ENCODE measurements at regions of chr2 and their contacts with region 1.

Region 1: GRCh38 chr2:85595301-85596025 is at the start of gene RNF181:
- DNase-seq: peak; percentile 99
- H3K4me3 Mint-ChIP-seq: peak within 1 kb of the TSS; percentile 98
- H3K27ac Mint-ChIP-seq: peak within 1 kb of the TSS; percentile 98
- H3K4me1 Mint-ChIP-seq: peaks cover 19% of the 10 kb centered on the region
- H3K27me3 Mint-ChIP-seq: no peaks in the 10 kb centered on the region
- CTCF ChIP-seq: no peak
- total RNA-seq, gene RNF181: 125 and 215 TPM in 2 replicates

Region 2: GRCh38 chr2:85420536-85421259 is 174.8 kb before region 1 on chr2:
- CTCF ChIA-PET with region 1: interaction called, 9 read pairs
- POLR2A ChIA-PET with region 1: interaction called, 12 read pairs
- intact Hi-C with region 1: loop called (anchors 5 kb)
- DNase-seq: peak; percentile 83
- H3K4me3 Mint-ChIP-seq: peak overlapping the region; percentile 24
- H3K27ac Mint-ChIP-seq: peak overlapping the region; percentile 92
- H3K4me1 Mint-ChIP-seq: peaks cover 30% of the 10 kb centered on the region
- H3K27me3 Mint-ChIP-seq: no peaks in the 10 kb centered on the region
- CTCF ChIP-seq: peak; percentile 99

Region 3: GRCh38 chr2:85561317-85561979 is 34.0 kb before region 1 on chr2 and contains the start of gene GGCX:
- CTCF ChIA-PET with region 1: interaction called, 3 read pairs
- POLR2A ChIA-PET with region 1: interaction called, 28 read pairs
- intact Hi-C with region 1: loop called (anchors 5 kb)
- DNase-seq: peak; percentile 93
- H3K4me3 Mint-ChIP-seq: peak within 1 kb of the TSS; percentile 97
- H3K27ac Mint-ChIP-seq: peak within 1 kb of the TSS; percentile 93
- H3K4me1 Mint-ChIP-seq: peaks cover 6% of the 10 kb centered on the region
- H3K27me3 Mint-ChIP-seq: no peaks in the 10 kb centered on the region
- CTCF ChIP-seq: no peak
- total RNA-seq, gene GGCX: 49.1 and 52.2 TPM in 2 replicates

Region 4: DNA sequence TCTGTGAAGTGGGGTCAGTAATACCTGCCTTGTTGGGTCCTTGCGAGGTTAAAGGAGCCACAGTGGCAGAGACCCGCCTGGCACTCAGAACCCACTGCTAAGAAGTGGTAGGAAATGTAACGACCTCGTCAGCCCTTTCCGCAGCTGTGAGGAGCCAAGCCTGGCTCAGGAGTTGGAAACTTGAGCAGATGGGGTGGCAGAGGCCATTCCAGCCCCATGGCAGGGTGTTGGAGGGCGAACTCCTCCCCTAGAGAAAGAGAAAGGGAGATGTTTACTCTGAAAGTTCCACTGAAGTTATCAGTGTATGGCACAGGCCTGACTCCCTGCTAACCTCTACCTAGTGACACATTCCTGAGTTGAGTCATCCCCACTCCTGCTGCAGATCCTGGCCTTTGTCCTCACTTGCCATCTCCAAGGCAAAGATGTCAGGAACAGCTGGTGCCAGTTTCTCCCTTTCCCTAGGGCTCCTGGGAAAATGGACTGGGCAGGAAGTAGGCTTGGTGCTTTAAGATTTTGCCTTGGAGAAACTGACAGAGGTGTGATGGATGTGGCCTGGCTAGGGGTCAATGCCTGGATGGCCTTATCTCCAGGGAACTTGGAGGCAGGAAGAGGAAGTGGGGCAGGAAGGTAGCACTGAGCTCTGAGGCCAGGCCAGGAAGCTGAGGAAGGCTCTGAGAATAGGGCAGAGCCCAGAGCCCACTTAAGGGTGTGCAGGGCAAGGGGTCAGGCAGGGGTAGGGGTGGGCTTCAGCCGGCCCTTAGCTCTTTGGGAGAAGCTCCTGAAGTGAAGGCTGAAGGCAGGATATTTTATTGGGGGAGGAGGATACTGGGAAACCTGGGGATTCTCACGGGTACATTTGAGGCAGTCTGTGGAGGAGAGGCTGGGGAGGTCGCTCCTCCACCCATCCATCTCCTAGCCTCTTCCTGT is 10.3 kb before region 1 on chr2:
- CTCF ChIA-PET with region 1: interaction called, 5 read pairs
- POLR2A ChIA-PET with region 1: interaction called, 113 read pairs
- intact Hi-C with region 1: no loop called
- DNase-seq: peak; percentile 43
- H3K4me3 Mint-ChIP-seq: no peak overlapping the region
- H3K27ac Mint-ChIP-seq: peak overlapping the region; percentile 91
- H3K4me1 Mint-ChIP-seq: peaks cover 14% of the 10 kb centered on the region
- H3K27me3 Mint-ChIP-seq: no peaks in the 10 kb centered on the region
- CTCF ChIP-seq: no peak

Measured in MCF 10A (cell line).